Activated T-helper 2 cell treated with anti-CD3 and anti-CD28 coated beads, Interferon-gamma antibody, Interleukin-2, Interleukin-4, amounts not matched to agents 10 μg/mL and 5 μg/mL and 100 μg/mL, durations not matched to agents 14 hours and 24 hours and 36 hours (primary cell): ENCODE measurements at regions of chr6 and their contacts with region 1.

Region 1: GRCh38 chr6:137218917-137219663 is at the start of gene IFNGR1:
- DNase-seq: peak; percentile 93
- H3K4me3 Mint-ChIP-seq: peak within 1 kb of the TSS; percentile 98
- H3K27ac Mint-ChIP-seq: peak within 1 kb of the TSS; percentile 99
- H3K4me1 Mint-ChIP-seq: peaks cover 51% of the 10 kb centered on the region
- H3K27me3 Mint-ChIP-seq: no peaks in the 10 kb centered on the region
- total RNA-seq, gene IFNGR1: 22.2 and 26.2 TPM in 2 replicates

Region 2: GRCh38 chr6:136921936-136922684 is 297.0 kb before region 1 on chr6 and contains the start of gene SLC35D3:
- intact Hi-C with region 1: no loop called
- DNase-seq: peak; percentile 10
- H3K4me3 Mint-ChIP-seq: peak within 1 kb of the TSS; percentile 74
- H3K27ac Mint-ChIP-seq: no peak within 1 kb of the TSS
- H3K4me1 Mint-ChIP-seq: peaks cover 14% of the 10 kb centered on the region
- H3K27me3 Mint-ChIP-seq: peaks cover 57% of the 10 kb centered on the region
- total RNA-seq, gene SLC35D3: not detected in 2 replicates

Region 3: DNA sequence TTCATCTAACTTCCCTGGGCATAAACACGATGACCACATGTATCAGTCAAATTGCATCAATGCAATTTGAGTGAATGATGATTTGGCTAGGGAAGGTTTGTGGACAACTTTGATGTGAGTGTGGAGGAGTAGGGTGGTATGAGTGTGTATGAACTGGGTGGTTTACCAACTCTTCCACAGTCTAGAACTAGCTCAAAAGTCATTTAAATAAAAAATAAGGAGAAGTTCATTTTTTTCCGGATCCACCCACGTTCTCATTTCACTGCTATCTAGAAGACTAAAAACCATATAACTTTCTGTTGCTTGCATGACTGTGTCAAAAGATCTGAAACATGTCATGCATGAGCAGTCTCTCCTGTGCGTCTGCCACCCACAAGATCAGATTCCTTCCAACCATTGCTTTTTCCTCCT is 273.4 kb before region 1 on chr6:
- intact Hi-C with region 1: loop called (anchors 5 kb)
- DNase-seq: no peak
- H3K4me3 Mint-ChIP-seq: no peak overlapping the region
- H3K27ac Mint-ChIP-seq: no peak overlapping the region
- H3K4me1 Mint-ChIP-seq: no peaks in the 10 kb centered on the region
- H3K27me3 Mint-ChIP-seq: peaks cover 5% of the 10 kb centered on the region

Region 4: DNA sequence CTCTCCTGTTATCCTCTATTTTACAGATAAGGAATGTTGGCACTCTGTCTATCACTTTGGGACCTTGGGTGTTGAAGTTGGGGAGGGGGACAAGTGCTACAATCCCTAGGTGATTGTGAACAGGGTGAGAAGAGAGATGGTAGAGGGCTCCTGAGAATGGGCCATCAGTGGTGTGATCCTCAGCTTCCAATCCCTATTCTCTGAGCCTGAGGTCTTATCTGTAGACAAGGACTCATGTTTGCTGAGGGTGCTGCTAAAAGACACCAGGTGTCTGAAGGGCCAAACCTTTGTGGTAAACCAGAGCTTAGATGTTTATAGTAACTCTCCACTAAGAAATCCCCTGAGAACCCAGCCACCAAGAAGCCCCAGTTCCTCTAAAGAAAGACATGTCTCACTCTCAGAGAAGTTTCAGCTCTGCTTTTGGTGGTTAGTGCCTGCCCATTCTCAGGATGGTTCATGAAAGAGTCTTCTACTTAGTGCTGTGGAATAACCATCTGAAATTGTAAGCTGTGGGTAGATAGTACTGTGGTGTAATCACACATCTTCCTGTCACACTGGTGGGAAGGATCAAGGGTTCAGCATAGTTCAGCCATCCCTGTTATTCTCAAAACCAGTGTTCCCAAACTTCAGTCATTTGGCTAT is 116.1 kb before region 1 on chr6:
- intact Hi-C with region 1: loop called (anchors 5 kb)
- DNase-seq: no peak
- H3K4me3 Mint-ChIP-seq: no peak overlapping the region
- H3K27ac Mint-ChIP-seq: no peak overlapping the region
- H3K4me1 Mint-ChIP-seq: peaks cover 15% of the 10 kb centered on the region
- H3K27me3 Mint-ChIP-seq: no peaks in the 10 kb centered on the region

Region 5: DNA sequence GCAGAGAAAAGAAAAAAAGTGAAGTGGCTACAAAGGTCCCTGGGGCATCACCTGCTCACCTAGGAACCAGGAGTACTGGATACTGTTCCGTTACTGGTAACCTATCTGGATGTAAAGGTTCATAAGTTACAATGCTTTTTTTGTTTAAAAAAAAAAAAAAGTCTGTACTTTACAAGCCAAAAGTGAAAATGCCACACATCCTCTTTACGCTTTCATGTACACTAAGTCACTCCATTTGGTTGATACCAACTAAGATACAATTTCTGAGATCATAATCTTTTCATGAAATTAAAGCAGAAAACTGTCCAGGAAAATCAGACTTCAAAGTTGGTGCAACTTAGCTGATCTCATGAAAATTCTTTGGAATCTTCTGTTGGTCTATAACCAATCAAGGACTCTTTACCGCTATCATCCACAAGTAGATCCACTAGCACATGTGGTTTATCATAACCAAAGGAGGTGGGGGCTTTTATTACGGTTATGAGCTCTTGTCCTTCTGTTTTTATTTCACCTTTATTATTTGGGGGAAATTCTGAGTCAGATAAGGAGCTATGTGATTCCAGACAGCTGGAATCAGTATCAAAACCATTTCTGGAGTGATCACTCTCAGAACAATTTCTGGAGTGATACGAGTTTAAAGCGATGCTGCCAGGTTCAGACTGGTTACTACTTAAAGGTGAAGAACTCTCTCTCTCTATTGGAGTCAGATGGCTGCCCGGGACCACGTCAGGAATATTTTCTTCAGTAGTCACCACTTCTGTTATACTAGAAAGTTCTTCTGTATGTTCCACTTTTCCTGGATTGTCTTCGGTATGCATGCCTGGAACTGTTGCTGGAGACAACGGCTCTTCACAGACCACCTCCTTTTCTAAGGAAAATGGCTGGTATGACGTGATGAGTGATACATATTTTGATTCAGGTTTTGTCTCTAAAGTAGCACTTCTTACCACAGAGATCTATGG is 21.1 kb before region 1 on chr6:
- intact Hi-C with region 1: loop called (anchors 2 kb)
- DNase-seq: no peak
- H3K4me3 Mint-ChIP-seq: no peak overlapping the region
- H3K27ac Mint-ChIP-seq: no peak overlapping the region
- H3K4me1 Mint-ChIP-seq: peaks cover 21% of the 10 kb centered on the region
- H3K27me3 Mint-ChIP-seq: no peaks in the 10 kb centered on the region

Region 6: GRCh38 chr6:137389150-137389704 is 170.1 kb after region 1 on chr6:
- intact Hi-C with region 1: loop called (anchors 5 kb)
- DNase-seq: peak; percentile 61
- H3K4me3 Mint-ChIP-seq: peak overlapping the region; percentile 15
- H3K27ac Mint-ChIP-seq: peak overlapping the region; percentile 31
- H3K4me1 Mint-ChIP-seq: peaks cover 23% of the 10 kb centered on the region
- H3K27me3 Mint-ChIP-seq: no peaks in the 10 kb centered on the region